Left colon (tissue), 2 donors: ENCODE measurements at regions of chr11 and their contacts with region 1.

Region 1: DNA sequence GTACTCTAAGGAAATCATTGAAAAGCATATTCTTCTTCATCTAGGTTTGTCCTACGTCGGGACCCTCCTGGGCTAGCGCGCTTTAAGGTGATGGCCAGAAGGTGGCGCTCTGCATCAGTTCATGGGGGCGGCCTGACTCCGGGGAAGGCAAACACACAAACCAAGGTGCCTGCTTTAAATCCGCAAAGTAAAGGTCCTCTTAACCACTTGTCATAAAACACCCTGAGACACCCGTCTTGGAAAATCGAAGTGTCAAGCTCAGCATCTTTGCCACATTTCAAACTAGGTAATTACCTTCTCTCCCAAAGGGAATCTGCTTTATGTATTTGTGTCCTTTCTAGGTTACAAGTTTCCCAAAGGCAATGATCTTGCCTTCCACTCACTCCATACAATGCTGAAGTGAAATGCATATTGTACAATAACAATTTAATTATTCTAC is 33.9 kb downstream of the LMO2 start:
- DNase-seq: peak; percentile 45 to 75
- ATAC-seq: peak; percentile 71

Region 2: GRCh38 chr11:33598426-33599069 is 259.4 kb before region 1 on chr11:
- intact Hi-C with region 1: no loop called
- DNase-seq: no peak
- ATAC-seq: no peak

Region 3: DNA sequence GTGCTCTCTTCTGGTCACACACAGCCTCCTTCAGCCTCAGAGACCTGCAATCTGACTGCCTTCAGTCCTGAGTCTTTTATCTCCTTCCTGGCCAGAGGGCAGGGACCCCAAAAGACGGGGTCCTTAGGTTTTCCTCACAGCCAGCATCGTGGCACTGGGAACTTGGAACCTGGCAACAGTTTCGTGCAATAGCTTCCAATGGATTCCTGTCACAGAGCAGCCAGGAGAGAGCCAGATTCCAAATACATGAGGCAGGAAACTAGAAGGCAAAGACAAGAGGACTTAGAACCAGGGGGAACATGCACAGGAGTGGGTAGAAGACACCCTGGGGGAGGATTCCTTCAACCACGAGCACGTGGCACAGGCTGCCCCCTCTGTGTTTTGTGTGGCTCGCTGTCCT is 206.0 kb before region 1 on chr11:
- intact Hi-C with region 1: no loop called
- DNase-seq: no peak
- ATAC-seq: no peak

Region 4: GRCh38 chr11:33970984-33971466 is 113.1 kb after region 1 on chr11:
- intact Hi-C with region 1: loop called (anchors 5 kb)
- DNase-seq: peak; percentile 32 to 36
- ATAC-seq: peak; percentile 88